H1 (cell line): ENCODE measurements at regions of chr3 and their contacts with region 1.

Region 1: DNA sequence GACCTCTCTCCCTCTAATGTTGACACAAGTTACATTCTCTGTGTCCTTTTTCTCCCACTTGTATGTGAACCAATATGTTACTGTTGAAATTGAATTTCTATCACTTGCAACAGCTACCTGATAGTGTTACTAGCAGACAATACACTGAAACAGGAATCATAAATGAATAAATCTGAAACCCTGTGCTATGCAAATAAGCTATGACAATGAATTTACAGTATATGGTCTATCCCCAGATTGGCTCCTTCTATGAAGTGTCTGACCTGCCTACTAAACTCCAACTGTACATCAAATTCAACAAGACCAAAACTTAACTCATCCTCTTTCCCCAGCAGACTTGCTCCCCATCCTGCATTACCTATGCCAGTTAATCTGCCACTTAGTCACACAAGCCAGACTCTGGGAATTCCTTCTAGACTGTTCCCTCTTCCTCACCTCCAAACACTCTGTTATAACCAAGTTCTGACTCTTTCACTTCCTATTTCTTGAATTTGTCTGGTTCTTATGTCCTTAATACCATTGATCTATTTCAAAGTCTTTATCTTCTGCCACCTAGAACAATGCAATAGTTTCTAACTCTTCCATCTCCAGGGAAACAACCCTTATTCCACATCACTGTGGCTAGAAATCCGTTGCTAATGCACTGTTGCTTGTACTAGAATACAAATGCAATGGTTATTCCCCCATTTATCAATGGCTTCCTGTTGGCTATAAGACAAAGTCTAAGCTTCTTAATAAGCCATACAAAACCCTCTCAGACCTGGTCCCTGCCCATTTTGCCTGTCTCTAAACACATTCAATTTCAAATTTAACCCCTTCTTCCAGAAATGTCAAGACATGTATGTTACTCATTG is 13.4 kb upstream of the ZNF639 start:
- DNase-seq: no peak
- H3K4me3 ChIP-seq: no peak overlapping the region
- H3K27ac ChIP-seq: no peak overlapping the region
- H3K4me1 ChIP-seq: no peaks in the 10 kb centered on the region
- H3K27me3 ChIP-seq: no peaks in the 10 kb centered on the region
- CTCF ChIP-seq: no peak
- EP300 ChIP-seq: no peak
- POLR2A ChIP-seq: no peak
- RAD21 ChIP-seq: no peak

Region 2: GRCh38 chr3:179015551-179016020 is 293.9 kb before region 1 on chr3:
- CTCF ChIA-PET with region 1: interaction called, 25 read pairs
- POLR2A ChIA-PET with region 1: no interaction called
- DNase-seq: peak; percentile 23 to 55
- H3K4me3 ChIP-seq: no peak overlapping the region
- H3K27ac ChIP-seq: no peak overlapping the region
- H3K4me1 ChIP-seq: no peaks in the 10 kb centered on the region
- H3K27me3 ChIP-seq: no peaks in the 10 kb centered on the region
- CTCF ChIP-seq: peak in 2 of 3 experiments; percentile 77 to 90; a peak in 3 of 4 replicates
- EP300 ChIP-seq: no peak
- POLR2A ChIP-seq: no peak
- RAD21 ChIP-seq: peak; percentile 92 to 93

Region 3: DNA sequence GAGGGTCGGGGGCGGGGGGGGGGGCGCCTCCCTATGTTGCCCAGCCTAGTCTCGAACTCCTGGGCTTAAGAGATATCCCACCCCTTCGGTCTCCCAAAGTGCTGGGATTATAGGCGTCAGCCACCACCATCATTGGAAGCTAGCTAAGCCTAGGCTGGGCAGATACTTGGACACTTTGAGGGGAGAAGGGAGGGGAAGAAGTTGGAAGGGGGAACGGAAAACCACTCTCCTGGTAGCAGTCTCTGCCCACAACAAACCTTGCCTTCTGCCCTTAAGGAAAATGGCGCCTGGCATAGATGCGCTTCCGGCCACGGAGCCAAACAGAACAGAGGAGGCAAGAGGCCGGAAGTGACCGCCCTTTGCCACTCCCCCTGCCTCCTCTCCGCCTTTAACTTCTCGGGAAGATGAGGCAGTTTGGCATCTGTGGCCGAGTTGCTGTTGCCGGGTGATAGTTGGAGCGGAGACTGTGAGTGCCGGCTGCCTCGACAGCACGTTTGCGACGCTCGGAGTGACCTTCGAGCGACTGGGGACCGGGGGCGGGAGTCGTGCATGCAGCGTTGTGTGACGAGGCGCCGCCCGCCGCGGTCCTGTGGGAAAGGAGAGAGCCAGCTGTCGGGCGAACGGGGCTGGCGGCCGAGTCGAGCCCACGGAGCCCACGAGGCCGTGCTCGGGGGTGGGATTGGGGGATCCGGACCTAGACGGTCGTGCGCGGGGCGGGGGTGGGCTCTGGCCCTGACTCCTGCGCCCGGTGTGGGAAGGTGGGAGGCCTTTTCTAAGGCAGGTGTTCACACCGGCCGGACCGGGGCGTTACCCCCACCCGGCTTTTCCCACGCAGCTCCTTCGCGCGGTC is 38.1 kb after region 1 on chr3 and contains the start of gene MFN1:
- CTCF ChIA-PET with region 1: no interaction called
- POLR2A ChIA-PET with region 1: no interaction called
- DNase-seq: peak; percentile 74 to 79
- H3K4me3 ChIP-seq: peak within 1 kb of the TSS; percentile 69 to 91 (median 84)
- H3K27ac ChIP-seq: peak within 1 kb of the TSS; percentile 55; the same call in 1 of the 2 replicates
- H3K4me1 ChIP-seq: peaks cover 0 to 5% (median 1%) of the 10 kb centered on the region in 4 experiments; a peak in 1 of 7 replicates
- H3K27me3 ChIP-seq: no peaks in the 10 kb centered on the region
- CTCF ChIP-seq: no peak
- EP300 ChIP-seq: no peak
- POLR2A ChIP-seq: peak; percentile 75 to 78
- RAD21 ChIP-seq: no peak
- total RNA-seq, gene MFN1: 34.7 and 35.6 TPM in 2 replicates